ENCODE measurements at regions of chr6 and their contacts with region 1.

Region 1: DNA sequence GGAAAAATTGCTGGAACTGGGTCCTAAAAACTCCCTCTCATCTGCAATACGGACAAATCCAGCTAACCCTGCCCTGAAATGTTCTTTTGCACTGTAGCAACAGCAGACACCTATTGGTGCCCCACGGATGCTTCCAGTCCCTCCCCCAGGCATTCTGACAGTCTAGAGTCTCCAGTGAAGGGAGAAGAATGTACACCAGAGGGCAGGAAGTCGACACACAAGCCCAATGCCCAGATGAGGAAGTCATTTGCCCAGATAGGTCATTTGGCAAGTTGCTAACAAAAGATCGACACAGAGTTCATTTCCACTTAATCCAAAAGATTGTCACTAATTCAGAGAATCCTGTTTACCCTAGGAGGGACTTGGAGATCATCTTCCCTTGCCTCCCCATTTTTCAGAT is 293.0 kb upstream of the PRDM1 start:
- DNase-seq: peak in 3 of 9 donors; percentile 9 to 23 (median 15)
- ATAC-seq: peak; percentile 76
- H3K4me3 ChIP-seq: no peak overlapping the region
- H3K4me3 Mint-ChIP-seq: peak overlapping the region in 1 of 10 donors; percentile 28
- H3K27ac ChIP-seq: no peak overlapping the region
- H3K27ac Mint-ChIP-seq: peak overlapping the region in 1 of 9 donors; percentile 68
- H3K4me1 ChIP-seq: peaks cover 0 to 3% of the 10 kb centered on the region in 2 donors
- H3K4me1 Mint-ChIP-seq: peaks cover 6 to 79% (median 12%) of the 10 kb centered on the region in 7 donors
- H3K27me3 ChIP-seq: no peaks in the 10 kb centered on the region
- H3K27me3 Mint-ChIP-seq: peaks cover 0 to under 1% (median 0%) of the 10 kb centered on the region in 5 donors

Region 2: DNA sequence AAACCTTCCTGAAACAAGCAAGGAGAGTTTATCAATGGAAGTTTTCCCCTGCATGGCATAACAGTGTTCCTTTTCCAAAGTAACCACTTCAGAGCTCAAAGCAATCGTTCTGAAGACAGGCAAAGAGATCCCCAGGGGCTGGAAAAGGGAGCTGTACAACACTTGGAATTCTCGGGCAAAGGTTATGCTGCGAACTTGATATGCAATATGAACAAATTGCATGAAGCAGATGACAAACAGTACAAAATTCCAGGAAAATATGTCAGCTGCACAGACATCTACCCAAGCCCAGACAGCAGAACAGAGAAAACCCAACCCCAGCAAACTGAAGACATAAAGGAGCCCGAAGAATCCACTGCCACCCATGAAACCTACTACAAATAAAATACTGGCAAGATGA is 631.7 kb before region 1 on chr6:
- CTCF ChIA-PET with region 1: no interaction called
- POLR2A ChIA-PET with region 1: no interaction called
- intact Hi-C with region 1: no loop called
- DNase-seq: no peak
- ATAC-seq: no peak
- H3K4me3 ChIP-seq: no peak overlapping the region
- H3K4me3 Mint-ChIP-seq: no peak overlapping the region
- H3K27ac ChIP-seq: no peak overlapping the region
- H3K27ac Mint-ChIP-seq: no peak overlapping the region
- H3K4me1 ChIP-seq: no peaks in the 10 kb centered on the region
- H3K4me1 Mint-ChIP-seq: no peaks in the 10 kb centered on the region
- H3K27me3 ChIP-seq: peaks cover 0 to 3% of the 10 kb centered on the region in 2 donors
- H3K27me3 Mint-ChIP-seq: peaks cover 13 to 40% (median 30%) of the 10 kb centered on the region in 5 donors

Region 3: DNA sequence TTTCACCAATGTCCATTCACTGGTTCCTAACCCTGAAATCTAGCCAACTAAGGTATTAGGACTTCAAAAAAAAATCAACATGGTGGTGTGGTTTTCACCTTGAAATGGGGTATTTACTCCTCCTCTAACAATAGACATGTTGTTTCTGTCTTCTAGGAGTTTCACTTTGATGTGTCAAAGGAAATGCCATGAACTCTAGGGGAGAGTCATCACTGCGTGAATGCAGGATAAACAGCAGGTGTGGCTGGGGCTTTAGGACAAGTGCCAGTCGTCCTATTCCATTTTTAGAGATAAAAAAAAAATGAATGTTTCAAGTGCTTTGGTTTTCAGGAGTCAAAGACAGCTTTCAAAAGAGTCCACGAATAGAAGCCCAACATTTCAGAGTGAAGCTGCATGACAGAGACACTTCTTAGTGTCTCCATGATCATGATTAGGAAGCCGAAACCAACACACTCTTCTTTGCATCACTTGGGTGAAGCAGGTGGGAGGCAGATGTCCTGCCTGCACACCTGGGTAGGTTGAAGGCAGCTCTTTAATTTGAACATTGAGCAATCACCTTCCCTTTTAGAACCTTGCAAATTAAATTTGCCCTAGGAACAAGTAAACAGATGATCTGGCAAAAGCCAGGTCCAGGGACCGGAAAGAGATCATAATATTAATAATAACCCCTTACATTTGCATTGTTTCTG is 35.5 kb before region 1 on chr6:
- CTCF ChIA-PET with region 1: no interaction called
- POLR2A ChIA-PET with region 1: no interaction called
- intact Hi-C with region 1: loop called in 1 of 2 experiments (anchors 5 kb)
- DNase-seq: no peak
- ATAC-seq: no peak
- H3K4me3 ChIP-seq: no peak overlapping the region
- H3K4me3 Mint-ChIP-seq: peak overlapping the region in 1 of 10 donors; percentile 69
- H3K27ac ChIP-seq: no peak overlapping the region
- H3K27ac Mint-ChIP-seq: peak overlapping the region in 1 of 9 donors; percentile 84
- H3K4me1 ChIP-seq: peaks cover 0 to 7% of the 10 kb centered on the region in 2 donors
- H3K4me1 Mint-ChIP-seq: peaks cover 0 to 51% (median 0%) of the 10 kb centered on the region in 7 donors
- H3K27me3 ChIP-seq: no peaks in the 10 kb centered on the region
- H3K27me3 Mint-ChIP-seq: peaks cover 0 to 18% (median 0%) of the 10 kb centered on the region in 5 donors

Region 4: DNA sequence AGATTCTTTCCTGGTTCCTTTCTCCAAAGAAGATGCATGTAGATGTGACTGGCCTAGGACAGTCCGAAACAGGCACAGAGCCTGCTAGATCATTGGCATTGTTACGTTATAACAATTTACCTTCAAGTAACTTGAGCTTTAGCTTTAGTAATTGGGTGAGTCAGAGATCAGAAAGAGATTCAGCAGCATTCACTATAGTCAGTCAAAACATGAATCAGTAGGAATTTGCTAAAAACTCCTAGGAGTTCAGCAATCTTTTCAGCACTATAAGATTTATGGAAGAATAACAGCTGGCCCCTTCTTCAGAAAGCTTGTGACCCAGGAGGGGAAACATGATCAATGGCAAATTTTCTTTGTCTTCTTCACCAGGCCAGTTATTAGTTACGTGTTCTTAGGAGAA is 11.3 kb after region 1 on chr6:
- CTCF ChIA-PET with region 1: no interaction called
- POLR2A ChIA-PET with region 1: no interaction called
- intact Hi-C with region 1: no loop called
- DNase-seq: no peak
- ATAC-seq: no peak
- H3K4me3 ChIP-seq: no peak overlapping the region
- H3K4me3 Mint-ChIP-seq: no peak overlapping the region
- H3K27ac ChIP-seq: no peak overlapping the region
- H3K27ac Mint-ChIP-seq: no peak overlapping the region
- H3K4me1 ChIP-seq: peaks cover 0 to 16% of the 10 kb centered on the region in 2 donors
- H3K4me1 Mint-ChIP-seq: peaks cover 0 to 35% (median 5%) of the 10 kb centered on the region in 7 donors
- H3K27me3 ChIP-seq: no peaks in the 10 kb centered on the region
- H3K27me3 Mint-ChIP-seq: peaks cover 0 to 3% (median 0%) of the 10 kb centered on the region in 5 donors

Region 5: DNA sequence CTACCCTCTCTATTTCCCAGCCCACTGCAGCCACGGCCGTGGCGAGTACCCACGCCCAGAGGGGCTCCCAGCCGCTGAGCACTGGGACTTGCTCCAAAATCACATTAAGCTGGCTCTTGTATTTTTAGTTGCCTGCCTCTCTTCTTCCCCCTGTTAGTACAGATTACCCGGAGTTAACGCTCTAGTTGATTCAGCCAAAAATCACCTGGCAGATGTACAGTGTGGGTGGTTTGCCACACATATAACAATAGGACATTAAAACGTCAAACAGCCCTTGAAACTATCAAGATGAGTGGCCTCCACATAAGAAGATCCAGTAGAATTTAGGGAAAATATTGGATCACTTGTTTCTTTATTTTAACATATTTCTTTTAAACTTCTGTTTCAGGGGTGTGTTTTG is 24.2 kb after region 1 on chr6:
- CTCF ChIA-PET with region 1: no interaction called
- POLR2A ChIA-PET with region 1: no interaction called
- intact Hi-C with region 1: no loop called
- DNase-seq: no peak
- ATAC-seq: no peak
- H3K4me3 ChIP-seq: no peak overlapping the region
- H3K4me3 Mint-ChIP-seq: no peak overlapping the region
- H3K27ac ChIP-seq: no peak overlapping the region
- H3K27ac Mint-ChIP-seq: no peak overlapping the region
- H3K4me1 ChIP-seq: no peaks in the 10 kb centered on the region
- H3K4me1 Mint-ChIP-seq: peaks cover 0 to 57% (median 0%) of the 10 kb centered on the region in 7 donors
- H3K27me3 ChIP-seq: no peaks in the 10 kb centered on the region
- H3K27me3 Mint-ChIP-seq: no peaks in the 10 kb centered on the region

Region 6: GRCh38 chr6:105892577-105893262 is 99.6 kb after region 1 on chr6:
- CTCF ChIA-PET with region 1: no interaction called
- POLR2A ChIA-PET with region 1: no interaction called
- intact Hi-C with region 1: no loop called
- DNase-seq: no peak
- ATAC-seq: peak; percentile 56
- H3K4me3 ChIP-seq: no peak overlapping the region
- H3K4me3 Mint-ChIP-seq: peak overlapping the region in 1 of 10 donors; percentile 0
- H3K27ac ChIP-seq: no peak overlapping the region
- H3K27ac Mint-ChIP-seq: peak overlapping the region in 1 of 9 donors; percentile 1
- H3K4me1 ChIP-seq: no peaks in the 10 kb centered on the region
- H3K4me1 Mint-ChIP-seq: peaks cover 0 to 19% (median 0%) of the 10 kb centered on the region in 7 donors
- H3K27me3 ChIP-seq: no peaks in the 10 kb centered on the region
- H3K27me3 Mint-ChIP-seq: peaks cover 0 to 7% (median 0%) of the 10 kb centered on the region in 5 donors

Measured in naive thymus-derived CD4-positive, alpha-beta T cell (primary cell).